Activated CD8-positive, alpha-beta T cell treated with anti-CD3 and anti-CD28 coated beads, Interleukin-2, amount 10 ng/mL, durations not matched to agents 7 days and 5 days (primary cell): ENCODE measurements at regions of chr3 and their contacts with region 1.

Region 1: DNA sequence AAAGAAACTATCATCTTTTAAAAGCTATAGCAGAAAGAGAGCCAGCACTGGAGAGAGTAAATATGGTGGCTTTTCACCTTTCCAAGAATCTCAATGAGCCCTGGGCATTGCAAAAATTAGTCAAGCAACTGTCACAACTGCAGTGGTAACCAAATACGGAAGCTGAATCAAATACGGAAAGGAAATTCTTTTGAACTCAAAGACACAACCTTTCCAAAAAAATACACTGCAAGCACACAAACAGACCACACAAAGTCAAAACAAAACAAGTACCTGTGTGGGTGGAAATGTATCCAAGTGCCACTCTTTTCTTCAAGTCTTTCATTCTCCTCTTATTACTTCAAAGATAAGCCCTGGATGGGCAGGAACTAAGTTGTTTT is 17.6 kb downstream of the VGLL4 start:
- DNase-seq: no peak
- ATAC-seq: peak; percentile 27
- H3K4me3 Mint-ChIP-seq: no peak overlapping the region
- H3K27ac Mint-ChIP-seq: peak overlapping the region; percentile 79
- H3K4me1 Mint-ChIP-seq: peaks cover 56% of the 10 kb centered on the region
- H3K27me3 Mint-ChIP-seq: no peaks in the 10 kb centered on the region

Region 2: GRCh38 chr3:11643605-11644087 is 17.6 kb after region 1 on chr3 and contains the start of gene VGLL4:
- CTCF ChIA-PET with region 1: interaction called, 14 read pairs
- POLR2A ChIA-PET with region 1: interaction called, 25 read pairs
- DNase-seq: peak; percentile 76
- ATAC-seq: peak; percentile 69
- H3K4me3 Mint-ChIP-seq: peak within 1 kb of the TSS; percentile 91
- H3K27ac Mint-ChIP-seq: peak within 1 kb of the TSS; percentile 98
- H3K4me1 Mint-ChIP-seq: peaks cover 37% of the 10 kb centered on the region
- H3K27me3 Mint-ChIP-seq: peaks cover 5% of the 10 kb centered on the region
- total RNA-seq, gene VGLL4: 37.1 TPM